H1 (cell line): ENCODE measurements at regions of chr3 and their contacts with region 1.

Region 1: DNA sequence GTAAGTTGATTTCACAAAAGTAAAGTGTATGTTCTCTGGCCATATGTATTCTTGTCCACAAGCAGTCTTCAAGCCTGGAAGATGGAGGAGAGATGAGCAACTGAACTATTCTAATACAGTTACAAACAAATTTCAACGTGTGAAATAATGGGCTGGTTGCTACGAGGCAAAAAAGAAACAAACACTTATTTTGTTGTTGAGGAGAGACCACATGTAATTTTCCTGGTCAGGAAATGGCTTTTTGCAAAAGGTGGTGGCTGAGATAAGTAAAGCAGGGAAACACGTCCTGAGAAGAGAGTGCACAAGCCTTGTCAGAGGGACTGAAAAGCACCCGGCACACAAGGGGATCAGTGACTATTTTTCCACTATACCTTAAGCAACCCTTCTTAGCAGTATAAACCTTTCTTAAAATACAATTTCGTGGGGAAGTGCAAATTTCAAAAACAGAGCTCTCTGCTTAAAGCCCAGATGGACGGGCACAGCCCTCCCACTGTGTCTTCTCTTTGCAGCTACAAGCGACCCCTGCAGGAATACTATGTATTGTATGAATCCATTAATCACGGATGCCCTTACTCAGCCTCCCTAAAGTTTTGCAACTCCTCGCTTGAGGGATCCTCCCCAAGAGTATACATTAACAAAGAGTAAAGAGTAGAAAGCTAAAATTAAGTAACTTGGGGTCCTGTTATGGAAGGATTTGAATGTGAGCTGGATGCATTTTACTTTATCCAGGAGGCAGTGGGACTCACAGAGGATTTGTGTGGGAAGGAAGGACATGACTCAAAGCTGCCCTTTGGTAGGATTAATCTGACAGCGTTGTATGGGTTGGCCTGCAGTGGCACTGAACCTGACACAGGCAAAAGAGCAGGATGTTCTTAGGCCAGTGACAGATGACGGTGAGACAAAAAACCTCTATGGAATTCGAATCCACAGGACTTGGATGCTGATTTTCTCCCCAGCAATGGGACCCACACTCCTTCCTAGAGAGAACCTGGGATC is 253.7 kb downstream of the IL5RA start:
- DNase-seq: no peak
- H3K4me3 ChIP-seq: no peak overlapping the region
- H3K27ac ChIP-seq: no peak overlapping the region
- H3K4me1 ChIP-seq: no peaks in the 10 kb centered on the region
- H3K27me3 ChIP-seq: no peaks in the 10 kb centered on the region
- CTCF ChIP-seq: peak; percentile 4 to 30 (median 17); a peak in 3 of 4 replicates
- EP300 ChIP-seq: no peak
- POLR2A ChIP-seq: no peak
- RAD21 ChIP-seq: peak; percentile 40 to 46

Region 2: GRCh38 chr3:2839876-2840275 is 16.6 kb before region 1 on chr3:
- CTCF ChIA-PET with region 1: interaction called, 12 read pairs
- POLR2A ChIA-PET with region 1: no interaction called
- DNase-seq: no peak
- H3K4me3 ChIP-seq: no peak overlapping the region
- H3K27ac ChIP-seq: no peak overlapping the region
- H3K4me1 ChIP-seq: no peaks in the 10 kb centered on the region
- H3K27me3 ChIP-seq: no peaks in the 10 kb centered on the region
- CTCF ChIP-seq: no peak
- EP300 ChIP-seq: no peak
- POLR2A ChIP-seq: no peak
- RAD21 ChIP-seq: no peak